B cell (primary cell): ENCODE measurements at regions of chr3 and their contacts with region 1.

Region 1: DNA sequence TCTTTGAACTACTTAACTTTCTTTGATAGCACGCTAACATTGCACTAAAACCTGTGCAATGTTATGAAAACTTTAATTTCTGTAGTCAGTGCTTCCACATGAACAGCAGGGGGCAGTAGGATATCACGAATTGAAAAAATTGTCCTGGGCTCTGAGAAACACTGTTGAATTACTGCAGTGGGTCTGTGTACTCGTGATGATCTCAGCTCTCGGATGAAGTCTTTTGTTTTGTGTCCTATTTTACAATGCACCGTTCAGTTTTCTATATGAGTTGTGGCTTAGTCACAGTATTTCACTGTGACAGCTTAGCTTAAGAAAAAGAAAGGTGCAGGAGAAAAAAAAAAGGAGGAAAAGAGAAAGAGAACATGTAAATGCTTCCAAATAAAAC is 141.3 kb upstream of the CCDC54 start:
- DNase-seq: peak; percentile 78
- ATAC-seq: peak; percentile 63
- H3K4me3 ChIP-seq: peak overlapping the region in 4 of 5 experiments; percentile 2 to 35 (median 28)
- H3K4me3 Mint-ChIP-seq: peak overlapping the region; percentile 20
- H3K27ac ChIP-seq: no peak overlapping the region
- H3K27ac Mint-ChIP-seq: no peak overlapping the region
- H3K4me1 ChIP-seq: peaks cover 5 to 14% of the 10 kb centered on the region in 2 donors
- H3K4me1 Mint-ChIP-seq: peaks cover 15% of the 10 kb centered on the region
- H3K27me3 ChIP-seq: peaks cover 0 to 2% (median 0%) of the 10 kb centered on the region in 4 experiments
- H3K27me3 Mint-ChIP-seq: peaks cover 4% of the 10 kb centered on the region
- CTCF ChIP-seq: peak; percentile 98

Region 2: GRCh38 chr3:107045791-107046190 is 190.1 kb before region 1 on chr3:
- CTCF ChIA-PET with region 1: no interaction called
- POLR2A ChIA-PET with region 1: no interaction called
- intact Hi-C with region 1: no loop called
- DNase-seq: no peak
- ATAC-seq: no peak
- H3K4me3 ChIP-seq: no peak overlapping the region
- H3K4me3 Mint-ChIP-seq: no peak overlapping the region
- H3K27ac ChIP-seq: no peak overlapping the region
- H3K27ac Mint-ChIP-seq: no peak overlapping the region
- H3K4me1 ChIP-seq: no peaks in the 10 kb centered on the region
- H3K4me1 Mint-ChIP-seq: no peaks in the 10 kb centered on the region
- H3K27me3 ChIP-seq: no peaks in the 10 kb centered on the region
- H3K27me3 Mint-ChIP-seq: no peaks in the 10 kb centered on the region
- CTCF ChIP-seq: no peak

Region 3: DNA sequence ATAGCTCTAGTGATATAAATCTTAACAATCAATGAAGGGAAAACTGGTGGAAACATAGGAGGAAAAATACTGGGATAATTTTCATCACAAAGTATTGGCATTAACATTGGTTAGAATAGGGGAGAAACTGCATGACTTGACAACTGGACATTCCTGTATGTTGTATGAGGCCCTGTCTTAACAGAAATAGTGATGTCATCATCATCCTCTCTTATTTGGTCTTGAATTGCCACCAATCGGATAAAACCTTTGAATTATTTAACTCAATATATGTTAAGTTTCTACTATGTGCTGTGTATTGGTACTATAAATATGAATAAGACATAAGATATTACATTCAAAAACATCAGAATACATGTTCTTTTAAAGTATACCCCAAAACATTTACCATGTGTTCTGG is 11.2 kb after region 1 on chr3:
- CTCF ChIA-PET with region 1: interaction called, 12 read pairs
- POLR2A ChIA-PET with region 1: no interaction called
- intact Hi-C with region 1: no loop called
- DNase-seq: no peak
- ATAC-seq: no peak
- H3K4me3 ChIP-seq: no peak overlapping the region
- H3K4me3 Mint-ChIP-seq: no peak overlapping the region
- H3K27ac ChIP-seq: no peak overlapping the region
- H3K27ac Mint-ChIP-seq: no peak overlapping the region
- H3K4me1 ChIP-seq: no peaks in the 10 kb centered on the region
- H3K4me1 Mint-ChIP-seq: peaks cover 2% of the 10 kb centered on the region
- H3K27me3 ChIP-seq: no peaks in the 10 kb centered on the region
- H3K27me3 Mint-ChIP-seq: no peaks in the 10 kb centered on the region
- CTCF ChIP-seq: no peak

Region 4: GRCh38 chr3:107429320-107430181 is 193.6 kb after region 1 on chr3:
- CTCF ChIA-PET with region 1: interaction called, 31 read pairs
- POLR2A ChIA-PET with region 1: no interaction called
- intact Hi-C with region 1: no loop called
- DNase-seq: peak; percentile 82
- ATAC-seq: peak; percentile 52
- H3K4me3 ChIP-seq: peak overlapping the region; percentile 44 to 80 (median 70)
- H3K4me3 Mint-ChIP-seq: peak overlapping the region; percentile 97
- H3K27ac ChIP-seq: no peak overlapping the region
- H3K27ac Mint-ChIP-seq: peak overlapping the region; percentile 85
- H3K4me1 ChIP-seq: peaks cover 49% of the 10 kb centered on the region in 2 donors
- H3K4me1 Mint-ChIP-seq: peaks cover 59% of the 10 kb centered on the region
- H3K27me3 ChIP-seq: no peaks in the 10 kb centered on the region
- H3K27me3 Mint-ChIP-seq: no peaks in the 10 kb centered on the region
- CTCF ChIP-seq: peak; percentile 90

Region 5: GRCh38 chr3:107690522-107691138 is 454.7 kb after region 1 on chr3:
- CTCF ChIA-PET with region 1: no interaction called
- POLR2A ChIA-PET with region 1: no interaction called
- intact Hi-C with region 1: loop called (anchors 5 kb)
- DNase-seq: peak; percentile 66
- ATAC-seq: peak; percentile 64
- H3K4me3 ChIP-seq: no peak overlapping the region
- H3K4me3 Mint-ChIP-seq: no peak overlapping the region
- H3K27ac ChIP-seq: no peak overlapping the region
- H3K27ac Mint-ChIP-seq: no peak overlapping the region
- H3K4me1 ChIP-seq: peaks cover 0 to 2% of the 10 kb centered on the region in 2 donors
- H3K4me1 Mint-ChIP-seq: peaks cover 6% of the 10 kb centered on the region
- H3K27me3 ChIP-seq: no peaks in the 10 kb centered on the region
- H3K27me3 Mint-ChIP-seq: no peaks in the 10 kb centered on the region
- CTCF ChIP-seq: peak; percentile 70

Region 6: DNA sequence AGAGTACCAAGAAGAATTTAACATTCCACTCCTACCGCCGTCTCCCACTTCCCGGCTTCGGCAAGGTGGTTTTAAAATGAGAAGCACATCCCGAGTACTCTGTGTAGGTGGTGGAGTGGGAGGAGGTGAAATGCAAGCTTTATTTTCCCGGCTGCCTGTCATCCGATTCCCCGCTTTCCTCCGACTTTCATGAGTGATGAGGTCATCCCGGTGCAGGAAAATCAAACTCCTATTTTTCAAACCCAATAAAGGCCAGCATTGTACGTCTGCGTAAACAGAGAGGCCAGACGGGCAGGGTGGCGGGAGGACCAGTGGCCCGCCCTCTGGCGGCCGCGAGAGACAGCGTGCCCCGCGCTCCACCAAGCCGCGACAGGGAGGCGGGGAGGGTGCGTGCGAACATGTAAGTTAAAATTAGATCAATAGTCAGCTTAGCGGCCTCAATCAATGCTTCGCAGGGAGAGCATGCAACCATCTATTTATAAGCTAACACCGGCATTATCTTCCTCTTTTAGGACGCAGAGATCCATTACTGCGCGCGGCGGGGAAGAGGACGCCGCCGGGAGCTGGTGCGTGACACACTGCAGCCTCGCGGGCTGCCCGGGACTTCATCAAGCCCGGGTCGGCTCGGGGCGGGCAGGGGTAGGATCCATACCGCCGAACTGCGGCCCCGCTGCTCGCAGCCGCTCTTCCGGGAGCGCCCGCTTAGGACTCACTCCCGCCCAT is 691.6 kb after region 1 on chr3:
- CTCF ChIA-PET with region 1: interaction called, 13 read pairs
- POLR2A ChIA-PET with region 1: no interaction called
- intact Hi-C with region 1: loop called (anchors 1 kb)
- DNase-seq: peak; percentile 77
- ATAC-seq: peak; percentile 93
- H3K4me3 ChIP-seq: peak overlapping the region; percentile 48 to 67 (median 58)
- H3K4me3 Mint-ChIP-seq: peak overlapping the region; percentile 93
- H3K27ac ChIP-seq: no peak overlapping the region
- H3K27ac Mint-ChIP-seq: peak overlapping the region; percentile 54
- H3K4me1 ChIP-seq: peaks cover 12 to 18% of the 10 kb centered on the region in 2 donors
- H3K4me1 Mint-ChIP-seq: peaks cover 15% of the 10 kb centered on the region
- H3K27me3 ChIP-seq: peaks cover 0 to 30% (median 8%) of the 10 kb centered on the region in 4 experiments
- H3K27me3 Mint-ChIP-seq: peaks cover 9% of the 10 kb centered on the region
- CTCF ChIP-seq: peak; percentile 86

Region 7: DNA sequence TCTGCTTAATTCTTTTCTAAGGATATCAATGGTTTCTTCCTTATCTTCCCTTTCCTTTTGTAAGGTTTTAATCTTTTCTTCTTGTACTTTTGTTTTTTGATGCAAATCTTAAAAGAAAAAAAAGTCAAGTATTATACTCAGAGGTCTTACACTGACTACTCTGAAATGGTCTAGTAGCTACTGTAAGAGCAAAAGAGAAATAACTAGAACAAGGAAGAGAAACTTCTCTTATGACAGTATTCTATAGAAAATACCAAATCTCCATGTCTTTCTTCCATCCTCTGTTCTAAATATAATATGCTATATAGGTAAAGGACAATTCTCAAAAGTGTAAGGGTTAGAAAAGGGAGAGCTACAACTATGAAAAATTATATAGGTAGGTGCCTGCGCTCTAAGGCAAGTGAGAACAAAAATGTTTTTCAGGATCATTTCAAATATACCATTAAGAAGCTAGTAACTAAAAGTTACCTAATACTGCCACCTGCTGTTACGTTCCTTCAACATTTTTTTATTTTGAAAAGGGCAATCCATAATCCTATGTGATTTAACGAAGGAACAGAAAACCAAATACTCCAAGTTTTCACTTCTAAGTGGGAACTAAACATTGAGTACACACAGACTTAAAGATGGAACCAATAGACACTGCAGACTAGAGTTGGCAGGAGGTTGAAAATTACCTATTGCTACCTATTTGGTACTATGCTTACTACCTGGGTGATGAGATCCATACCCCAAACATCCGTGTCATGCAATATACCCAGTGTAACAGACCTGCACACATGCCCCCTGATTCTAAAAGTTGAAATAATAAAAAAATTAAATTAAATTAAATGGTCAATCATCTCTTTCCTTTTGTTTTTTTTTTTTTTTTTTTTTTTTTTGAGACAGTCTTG is 1316.6 kb after region 1 on chr3:
- CTCF ChIA-PET with region 1: interaction called, 30 read pairs
- POLR2A ChIA-PET with region 1: no interaction called
- intact Hi-C with region 1: loop called (anchors 1 kb)
- DNase-seq: peak; percentile 70
- ATAC-seq: peak; percentile 51
- H3K4me3 ChIP-seq: no peak overlapping the region
- H3K4me3 Mint-ChIP-seq: no peak overlapping the region
- H3K27ac ChIP-seq: peak overlapping the region in 1 of 2 donors; percentile 65
- H3K27ac Mint-ChIP-seq: peak overlapping the region; percentile 18
- H3K4me1 ChIP-seq: peaks cover 0 to 8% of the 10 kb centered on the region in 2 donors
- H3K4me1 Mint-ChIP-seq: peaks cover 7% of the 10 kb centered on the region
- H3K27me3 ChIP-seq: no peaks in the 10 kb centered on the region
- H3K27me3 Mint-ChIP-seq: no peaks in the 10 kb centered on the region
- CTCF ChIP-seq: peak; percentile 75